ENCODE measurements at regions of chr2 and their contacts with region 1.

Region 1: GRCh38 chr2:121810959-121811853 is 55.8 kb downstream of the TSN start:
- DNase-seq: peak; percentile 30
- H3K4me3 ChIP-seq: no peak overlapping the region
- H3K27ac ChIP-seq: no peak overlapping the region
- H3K4me1 ChIP-seq: no peaks in the 10 kb centered on the region
- H3K27me3 ChIP-seq: no peaks in the 10 kb centered on the region
- CTCF ChIP-seq: peak; percentile 39

Region 2: GRCh38 chr2:121649596-121650314 is 161.5 kb before region 1 on chr2:
- intact Hi-C with region 1: no loop called
- DNase-seq: peak; percentile 96
- H3K4me3 ChIP-seq: peak overlapping the region; percentile 87
- H3K27ac ChIP-seq: peak overlapping the region; percentile 92
- H3K4me1 ChIP-seq: peaks cover 6% of the 10 kb centered on the region
- H3K27me3 ChIP-seq: no peaks in the 10 kb centered on the region
- CTCF ChIP-seq: no peak

Region 3: DNA sequence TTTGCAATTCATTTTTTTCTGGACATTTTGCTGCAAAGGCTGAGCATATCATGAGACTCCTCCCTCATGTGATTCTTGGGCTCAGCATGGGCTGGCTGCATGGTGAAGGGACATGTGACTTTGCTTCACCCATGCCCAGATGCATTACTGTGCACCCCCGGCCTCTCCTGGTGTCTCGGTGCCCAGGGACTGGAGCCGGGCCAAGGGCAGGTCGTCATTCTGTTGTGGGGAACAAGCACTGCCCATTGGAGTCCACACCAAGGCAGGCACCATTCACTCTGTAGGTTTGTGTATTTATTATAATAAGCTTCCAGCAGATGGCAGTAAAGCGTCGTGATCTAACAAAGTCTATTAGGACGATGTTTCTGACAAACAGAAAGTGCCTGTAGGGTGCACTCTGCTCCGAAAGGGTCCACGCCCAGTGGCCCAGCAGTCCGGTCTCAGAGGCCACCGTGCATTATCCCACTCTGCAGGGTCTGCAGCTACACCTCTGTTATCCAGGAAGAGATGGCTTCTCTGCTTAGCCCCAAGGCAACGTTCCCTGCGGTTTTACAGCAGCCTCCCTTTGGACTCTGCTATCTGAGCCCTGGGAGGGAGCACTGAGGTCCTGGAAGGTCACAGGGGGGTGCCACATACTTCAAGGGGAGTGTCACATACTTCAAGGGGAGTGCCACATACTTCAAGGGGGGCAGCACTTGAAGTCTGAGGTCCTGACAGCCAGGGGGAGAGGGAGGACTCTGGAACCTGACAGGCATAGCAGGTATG is 163.9 kb after region 1 on chr2:
- intact Hi-C with region 1: loop called (anchors 10 kb)
- DNase-seq: peak; percentile 49
- H3K4me3 ChIP-seq: peak overlapping the region; percentile 23
- H3K27ac ChIP-seq: no peak overlapping the region
- H3K4me1 ChIP-seq: no peaks in the 10 kb centered on the region
- H3K27me3 ChIP-seq: no peaks in the 10 kb centered on the region
- CTCF ChIP-seq: peak; percentile 46